Activated CD8-positive, alpha-beta T cell treated with anti-CD3 and anti-CD28 coated beads, Interleukin-2, amount 10 ng/mL, durations not matched to agents 7 days and 5 days (primary cell): ENCODE measurements at regions of chr1 and their contacts with region 1.

Region 1: DNA sequence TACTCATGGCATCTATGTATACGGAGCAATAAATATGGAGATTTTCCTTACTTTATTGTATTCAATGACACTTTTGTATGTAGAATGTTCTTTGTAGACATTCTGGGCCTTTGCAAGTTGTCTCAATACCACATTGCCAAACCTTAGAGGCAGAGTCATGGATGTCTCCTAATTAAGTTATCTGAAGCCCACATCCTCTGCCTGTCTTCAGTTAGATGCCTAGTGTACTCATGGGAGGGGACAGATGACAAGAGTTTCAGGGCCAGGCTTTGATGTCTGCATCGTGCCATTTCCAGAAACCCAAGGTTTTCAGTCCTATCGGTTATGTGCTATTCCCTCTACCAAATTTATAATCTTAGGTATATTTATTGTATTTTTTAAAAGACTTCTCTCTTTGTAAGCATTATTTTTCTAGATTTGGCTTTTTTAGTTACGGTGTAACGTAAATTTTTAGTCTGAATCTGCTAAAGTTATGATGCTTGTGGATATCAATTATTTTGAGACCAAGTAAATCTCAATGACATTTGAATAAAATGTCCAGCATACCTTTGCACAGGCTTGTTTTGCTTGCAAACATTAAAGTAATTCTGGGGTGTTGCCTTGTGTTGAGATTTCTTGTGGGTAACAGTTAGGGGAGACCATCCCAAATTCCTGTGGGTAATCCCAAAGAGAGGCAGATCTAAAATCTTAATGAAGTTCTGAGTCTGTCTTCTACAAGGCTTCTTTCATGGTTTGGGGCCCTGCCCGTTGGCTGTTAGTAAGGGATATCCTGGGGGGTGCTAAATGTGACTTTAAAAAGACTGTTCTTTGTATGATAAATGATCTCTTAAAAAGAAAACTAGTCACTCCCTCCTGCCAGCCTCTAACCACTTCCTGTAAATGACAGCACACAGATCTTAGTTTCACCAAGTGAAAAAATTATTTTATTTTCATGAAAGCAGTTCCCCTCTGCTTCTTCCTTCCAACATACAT is 8.0 kb upstream of the MACF1 start:
- DNase-seq: peak; percentile 82
- ATAC-seq: peak; percentile 47
- H3K4me3 Mint-ChIP-seq: peak overlapping the region; percentile 71
- H3K27ac Mint-ChIP-seq: peak overlapping the region; percentile 98
- H3K4me1 Mint-ChIP-seq: peaks cover 80% of the 10 kb centered on the region
- H3K27me3 Mint-ChIP-seq: no peaks in the 10 kb centered on the region

Region 2: GRCh38 chr1:39177682-39178081 is 18.8 kb before region 1 on chr1:
- CTCF ChIA-PET with region 1: interaction called, 92 read pairs
- POLR2A ChIA-PET with region 1: no interaction called
- DNase-seq: no peak
- ATAC-seq: no peak
- H3K4me3 Mint-ChIP-seq: no peak overlapping the region
- H3K27ac Mint-ChIP-seq: no peak overlapping the region
- H3K4me1 Mint-ChIP-seq: no peaks in the 10 kb centered on the region
- H3K27me3 Mint-ChIP-seq: no peaks in the 10 kb centered on the region

Region 3: DNA sequence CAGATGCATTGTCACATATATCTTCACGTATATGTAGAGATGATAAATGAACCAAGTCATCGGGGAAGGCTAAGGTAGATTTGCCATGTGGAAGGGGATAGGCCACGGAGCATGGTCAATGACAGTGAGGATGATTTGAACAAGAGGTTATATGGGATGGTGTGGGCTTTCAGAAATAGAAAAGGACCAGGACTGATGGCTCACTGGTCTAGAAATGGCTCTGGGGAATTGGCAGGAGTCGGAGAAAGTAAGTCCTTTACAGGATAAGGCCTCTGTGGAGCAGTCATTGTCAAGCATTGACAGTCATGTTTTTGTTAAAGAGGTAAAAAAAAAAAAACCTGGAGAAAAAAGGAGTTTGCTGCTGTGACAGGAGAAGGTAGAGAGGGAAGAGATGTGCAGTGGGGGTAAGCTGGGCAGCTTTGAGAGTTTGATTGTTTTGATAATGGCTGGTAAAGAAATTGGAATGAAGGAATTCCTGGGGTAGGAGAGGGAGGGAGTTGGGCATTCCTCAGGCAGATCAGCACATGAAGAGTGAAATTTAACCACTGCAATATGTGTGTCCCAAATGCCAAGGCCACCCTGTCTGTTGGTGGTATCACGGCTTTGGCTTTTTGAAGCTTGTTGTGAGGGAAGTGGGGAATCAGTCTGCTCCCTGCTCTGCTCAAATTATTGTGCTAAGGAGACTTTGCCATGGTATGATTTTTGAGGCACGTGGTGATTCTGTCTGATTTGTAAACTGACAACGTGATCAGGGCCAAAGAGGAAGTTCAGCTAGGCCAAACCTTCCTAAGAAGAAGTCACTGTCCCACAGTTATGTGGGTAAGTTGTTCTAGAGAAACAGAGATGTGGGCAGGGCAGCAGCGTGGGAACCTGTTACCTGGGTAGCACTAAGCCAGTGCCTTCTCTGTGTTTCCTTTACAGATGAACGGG is 34.0 kb after region 1 on chr1:
- CTCF ChIA-PET with region 1: interaction called, 50 read pairs
- POLR2A ChIA-PET with region 1: interaction called, 4 read pairs
- DNase-seq: peak; percentile 33
- ATAC-seq: peak; percentile 74
- H3K4me3 Mint-ChIP-seq: no peak overlapping the region
- H3K27ac Mint-ChIP-seq: peak overlapping the region; percentile 64
- H3K4me1 Mint-ChIP-seq: peaks cover 35% of the 10 kb centered on the region
- H3K27me3 Mint-ChIP-seq: no peaks in the 10 kb centered on the region

Region 4: GRCh38 chr1:39258146-39258924 is 61.8 kb after region 1 on chr1:
- CTCF ChIA-PET with region 1: interaction called, 517 read pairs
- POLR2A ChIA-PET with region 1: interaction called, 22 read pairs
- DNase-seq: peak; percentile 69
- ATAC-seq: peak; percentile 57
- H3K4me3 Mint-ChIP-seq: no peak overlapping the region
- H3K27ac Mint-ChIP-seq: no peak overlapping the region
- H3K4me1 Mint-ChIP-seq: peaks cover 27% of the 10 kb centered on the region
- H3K27me3 Mint-ChIP-seq: no peaks in the 10 kb centered on the region

Region 5: GRCh38 chr1:39283858-39284257 is 87.3 kb after region 1 on chr1:
- CTCF ChIA-PET with region 1: interaction called, 29 read pairs
- POLR2A ChIA-PET with region 1: interaction called, 3 read pairs
- DNase-seq: no peak
- ATAC-seq: no peak
- H3K4me3 Mint-ChIP-seq: no peak overlapping the region
- H3K27ac Mint-ChIP-seq: no peak overlapping the region
- H3K4me1 Mint-ChIP-seq: no peaks in the 10 kb centered on the region
- H3K27me3 Mint-ChIP-seq: no peaks in the 10 kb centered on the region